Mammary epithelial cell (primary cell): ENCODE measurements at regions of chr5 and their contacts with region 1.

Region 1: DNA sequence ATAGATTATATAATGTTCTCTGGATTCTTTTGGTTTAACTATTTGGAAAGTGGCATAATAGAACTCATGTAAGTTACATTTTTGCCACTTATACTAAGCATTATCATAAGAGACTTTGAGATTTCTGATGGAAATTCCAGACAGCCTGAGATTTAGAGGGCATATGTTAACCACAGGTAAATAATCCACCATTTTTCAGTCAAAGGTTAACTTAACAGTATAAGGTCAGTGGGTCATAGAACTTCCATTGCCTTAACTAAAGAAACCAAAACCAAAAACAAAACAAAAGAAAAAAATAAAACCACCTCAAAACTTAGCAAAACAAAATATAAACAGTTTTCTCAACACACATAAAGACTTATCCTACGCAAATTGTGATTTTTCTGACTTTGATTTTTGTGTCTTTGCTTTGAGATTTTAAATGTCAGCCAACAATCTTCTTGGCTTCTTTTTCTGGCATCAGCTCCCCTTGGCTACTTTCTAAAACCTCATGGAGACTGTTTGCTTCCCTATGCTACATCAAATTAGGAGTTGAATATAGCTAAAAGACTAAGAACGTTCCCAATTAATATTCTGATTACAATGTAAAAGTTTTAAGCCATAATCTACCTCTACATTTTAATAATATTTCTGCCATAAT is 430.1 kb upstream of the DAB2 start:
- DNase-seq: no peak
- H3K4me3 ChIP-seq: no peak overlapping the region
- H3K27ac ChIP-seq: no peak overlapping the region
- H3K4me1 ChIP-seq: no peaks in the 10 kb centered on the region
- H3K27me3 ChIP-seq: peaks cover 6% of the 10 kb centered on the region
- CTCF ChIP-seq: no peak

Region 2: GRCh38 chr5:39808656-39809055 is 46.2 kb before region 1 on chr5:
- CTCF ChIA-PET with region 1: no interaction called
- dilution Hi-C with region 1: loop called (anchors 5 kb)
- in situ Hi-C with region 1: no loop called
- intact Hi-C with region 1: no loop called
- DNase-seq: no peak
- H3K4me3 ChIP-seq: no peak overlapping the region
- H3K27ac ChIP-seq: no peak overlapping the region
- H3K4me1 ChIP-seq: no peaks in the 10 kb centered on the region
- H3K27me3 ChIP-seq: peaks cover 6% of the 10 kb centered on the region
- CTCF ChIP-seq: no peak

Region 3: DNA sequence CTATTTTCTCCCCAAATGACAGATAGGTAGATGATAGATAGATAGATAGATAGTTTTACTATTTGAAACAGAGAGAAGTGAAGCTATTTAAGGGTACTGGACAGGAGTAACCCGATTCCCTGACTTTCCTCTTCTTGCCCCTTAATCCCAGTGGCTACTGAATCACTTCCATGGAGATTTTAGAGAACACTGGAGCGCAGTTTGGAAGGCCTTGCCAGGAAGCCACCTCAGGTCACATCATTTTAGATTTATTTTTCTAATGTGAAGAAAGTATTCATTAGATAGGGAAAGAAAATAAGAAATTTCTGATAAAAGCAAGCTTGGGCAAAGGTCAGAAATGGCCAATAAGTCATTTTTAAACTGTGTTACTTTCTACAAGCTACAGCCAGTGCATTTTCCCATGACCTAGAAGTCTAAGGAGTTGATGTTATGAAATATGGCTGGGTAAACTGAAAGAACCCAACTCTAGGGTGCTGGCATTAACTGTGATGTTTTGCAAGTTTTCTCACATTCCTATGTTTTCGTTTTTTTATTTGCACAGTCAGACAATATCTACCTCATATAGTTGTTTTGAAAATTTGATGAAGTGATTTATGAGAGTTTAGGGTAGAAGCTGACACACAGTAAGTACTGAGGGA is 280.1 kb after region 1 on chr5:
- CTCF ChIA-PET with region 1: no interaction called
- dilution Hi-C with region 1: no loop called
- in situ Hi-C with region 1: no loop called
- intact Hi-C with region 1: no loop called
- DNase-seq: no peak
- H3K4me3 ChIP-seq: no peak overlapping the region
- H3K27ac ChIP-seq: no peak overlapping the region
- H3K4me1 ChIP-seq: no peaks in the 10 kb centered on the region
- H3K27me3 ChIP-seq: no peaks in the 10 kb centered on the region
- CTCF ChIP-seq: no peak